ENCODE measurements at regions of chr18 and their contacts with region 1.

Region 1: DNA sequence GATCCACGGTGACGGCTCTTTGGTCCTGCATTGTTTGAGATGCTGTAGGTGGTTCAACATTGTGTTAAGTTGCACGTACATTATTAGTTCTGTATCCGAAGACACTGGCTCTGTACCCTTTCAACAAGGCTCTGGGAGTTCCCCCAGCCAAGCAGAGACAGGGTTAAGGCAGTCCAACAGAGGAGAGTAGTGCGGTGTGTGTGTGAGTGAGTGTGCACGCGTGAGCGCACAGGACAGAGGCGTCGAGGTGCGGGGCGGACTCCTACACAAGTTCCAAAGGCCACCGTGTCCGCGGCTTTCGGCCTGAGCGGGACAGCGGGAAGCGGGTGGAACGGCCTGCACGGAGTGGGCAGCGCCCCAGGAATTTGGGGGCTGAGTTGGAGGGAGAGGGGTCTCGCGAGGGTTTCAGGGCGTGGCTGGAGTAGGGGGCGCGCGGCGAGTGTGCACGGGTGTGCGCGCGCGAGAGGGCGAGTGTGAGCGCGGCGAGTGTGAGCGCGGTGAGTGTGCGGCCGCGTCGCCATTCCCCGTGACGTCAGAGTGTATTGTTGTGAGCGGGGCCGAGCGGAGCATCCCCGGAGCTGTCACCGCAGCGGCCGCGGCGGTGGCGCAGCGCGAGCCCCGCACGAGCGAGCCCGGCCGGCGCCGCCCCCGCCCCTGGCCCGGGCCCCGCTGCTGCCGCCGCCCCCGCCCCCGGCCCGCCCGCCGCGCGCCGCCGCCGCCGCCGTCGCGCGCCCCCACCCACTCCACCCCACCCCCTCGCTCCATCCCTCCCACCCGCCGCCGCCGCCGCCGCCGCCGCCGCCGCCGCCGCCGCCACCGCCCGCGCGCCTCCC is at the start of gene ASXL3:
- DNase-seq: no peak
- H3K4me3 Mint-ChIP-seq: peak within 1 kb of the TSS; percentile 68
- H3K27ac Mint-ChIP-seq: no peak within 1 kb of the TSS
- H3K4me1 Mint-ChIP-seq: peaks cover 2% of the 10 kb centered on the region
- H3K27me3 Mint-ChIP-seq: peaks cover 14% of the 10 kb centered on the region
- total RNA-seq, gene ASXL3: not detected in 2 replicates

Region 2: DNA sequence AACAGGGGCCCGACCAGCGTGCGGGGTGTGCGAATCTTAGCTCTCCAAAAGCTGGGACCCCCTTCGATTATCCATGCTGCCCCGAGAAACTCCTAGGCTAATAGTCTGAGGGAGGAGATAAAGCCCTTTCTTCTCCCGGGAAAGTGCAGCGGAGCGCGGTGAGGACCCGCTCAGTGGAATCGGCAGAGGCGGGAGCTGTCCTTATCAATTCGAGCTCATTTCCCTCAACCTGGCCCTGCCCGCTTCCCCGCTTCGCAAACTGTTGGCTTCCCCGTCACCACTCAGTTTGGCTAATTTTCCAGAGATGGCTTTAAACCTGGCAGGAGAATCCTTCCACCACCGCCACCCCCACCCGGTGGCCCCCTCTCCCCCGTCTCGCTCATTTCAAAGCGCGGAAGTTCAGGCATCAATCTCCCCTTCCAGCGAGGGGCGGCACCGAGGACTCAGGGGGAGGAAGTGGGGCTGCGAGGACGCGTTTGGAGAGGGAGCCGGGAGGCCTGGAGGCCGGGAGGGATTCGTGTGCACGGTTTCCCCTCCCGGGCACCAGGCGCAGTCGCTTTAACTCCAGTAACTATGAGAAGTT is 806.6 kb before region 1 on chr18:
- intact Hi-C with region 1: loop called (anchors 10 kb)
- DNase-seq: no peak
- H3K4me3 Mint-ChIP-seq: no peak overlapping the region
- H3K27ac Mint-ChIP-seq: no peak overlapping the region
- H3K4me1 Mint-ChIP-seq: no peaks in the 10 kb centered on the region
- H3K27me3 Mint-ChIP-seq: peaks cover 54% of the 10 kb centered on the region

Region 3: DNA sequence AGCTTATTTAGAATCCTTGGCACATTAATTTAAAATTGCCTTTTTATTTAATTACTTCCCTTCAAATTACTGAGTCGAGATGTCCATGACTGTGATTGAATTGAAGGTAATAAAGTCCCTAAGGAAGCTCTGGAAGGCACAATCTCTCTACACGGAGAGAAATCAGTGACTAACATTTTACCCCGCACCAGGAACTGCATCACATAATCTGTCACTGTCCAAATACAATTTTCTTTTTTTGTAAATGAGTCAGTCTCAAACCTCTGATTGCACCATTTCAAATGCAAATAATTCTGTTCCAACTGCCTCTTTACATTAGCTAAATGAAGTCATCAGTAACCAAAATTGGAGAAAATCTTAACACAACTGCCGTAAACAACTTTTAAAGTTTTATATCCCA is 449.3 kb before region 1 on chr18:
- intact Hi-C with region 1: no loop called
- DNase-seq: no peak
- H3K4me3 Mint-ChIP-seq: no peak overlapping the region
- H3K27ac Mint-ChIP-seq: no peak overlapping the region
- H3K4me1 Mint-ChIP-seq: no peaks in the 10 kb centered on the region
- H3K27me3 Mint-ChIP-seq: no peaks in the 10 kb centered on the region

Region 4: DNA sequence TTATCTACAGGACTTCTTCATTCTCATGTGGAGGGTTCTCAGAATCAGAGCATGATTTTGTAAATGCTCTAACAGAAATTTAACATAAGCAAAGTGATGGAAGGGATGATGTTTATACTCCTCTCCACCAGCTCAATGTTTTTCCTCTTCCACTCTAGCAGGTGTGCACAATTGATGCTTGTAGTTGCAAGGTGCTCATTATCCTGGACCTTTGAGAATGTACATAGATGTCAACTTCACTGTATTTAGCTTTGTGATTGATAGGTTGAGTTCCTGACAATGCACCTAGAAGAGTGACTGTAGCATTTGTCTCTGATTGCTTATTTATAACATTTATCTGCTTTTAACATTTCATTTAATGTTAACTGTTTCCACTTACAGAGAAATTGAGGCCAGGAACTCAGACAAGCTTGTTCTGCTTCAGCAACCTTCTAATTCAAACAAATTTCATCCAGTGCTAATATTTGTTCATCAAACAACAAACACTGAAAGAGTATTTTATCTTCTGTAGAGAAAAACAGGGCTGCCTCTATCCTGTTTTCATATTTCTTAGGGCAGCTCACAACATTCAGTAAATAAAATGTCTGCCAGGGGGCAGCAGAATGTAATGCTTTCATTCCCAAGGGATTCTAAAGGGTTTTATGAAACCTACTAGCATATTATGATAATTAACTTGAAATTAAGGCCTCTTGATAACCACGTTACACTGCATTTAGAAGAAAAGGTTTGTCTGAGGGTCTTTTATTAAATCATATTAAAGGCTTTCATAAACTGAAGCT is 774.7 kb after region 1 on chr18:
- intact Hi-C with region 1: no loop called
- DNase-seq: no peak
- H3K4me3 Mint-ChIP-seq: no peak overlapping the region
- H3K27ac Mint-ChIP-seq: no peak overlapping the region
- H3K4me1 Mint-ChIP-seq: no peaks in the 10 kb centered on the region
- H3K27me3 Mint-ChIP-seq: no peaks in the 10 kb centered on the region